T-cell (primary cell): ENCODE measurements at regions of chr4 and their contacts with region 1.

Region 1: GRCh38 chr4:26325191-26325590 is 4.4 kb downstream of the RBPJ start:
- DNase-seq: peak in 11 of 35 experiments; percentile 5 to 69 (median 12)
- ATAC-seq: peak; percentile 29 to 44 (median 34)
- H3K4me3 ChIP-seq: no peak overlapping the region
- H3K4me3 Mint-ChIP-seq: no peak overlapping the region
- H3K27ac ChIP-seq: no peak overlapping the region
- H3K27ac Mint-ChIP-seq: peak overlapping the region in 1 of 2 donors; percentile 40
- H3K4me1 ChIP-seq: peaks cover 12 to 15% of the 10 kb centered on the region in 2 experiments
- H3K4me1 Mint-ChIP-seq: peaks cover 37 to 52% (median 41%) of the 10 kb centered on the region in 3 donors
- H3K27me3 ChIP-seq: no peaks in the 10 kb centered on the region
- H3K27me3 Mint-ChIP-seq: no peaks in the 10 kb centered on the region

Region 2: GRCh38 chr4:25621027-25621930 is 703.9 kb before region 1 on chr4:
- CTCF ChIA-PET with region 1: no interaction called
- POLR2A ChIA-PET with region 1: no interaction called
- DNase-seq: no peak
- ATAC-seq: no peak
- H3K4me3 ChIP-seq: no peak overlapping the region
- H3K4me3 Mint-ChIP-seq: no peak overlapping the region
- H3K27ac ChIP-seq: no peak overlapping the region
- H3K27ac Mint-ChIP-seq: no peak overlapping the region
- H3K4me1 ChIP-seq: no peaks in the 10 kb centered on the region
- H3K4me1 Mint-ChIP-seq: peaks cover 0 to 7% (median 0%) of the 10 kb centered on the region in 3 donors
- H3K27me3 ChIP-seq: no peaks in the 10 kb centered on the region
- H3K27me3 Mint-ChIP-seq: peaks cover 5 to 6% of the 10 kb centered on the region in 2 donors

Region 3: GRCh38 chr4:26081795-26082498 is 243.2 kb before region 1 on chr4:
- CTCF ChIA-PET with region 1: interaction called in 1 of 2 experiments, 22 read pairs
- POLR2A ChIA-PET with region 1: no interaction called
- DNase-seq: peak in 2 of 35 experiments; percentile 13 to 66
- ATAC-seq: peak; percentile 52 to 71 (median 64)
- H3K4me3 ChIP-seq: no peak overlapping the region
- H3K4me3 Mint-ChIP-seq: no peak overlapping the region
- H3K27ac ChIP-seq: no peak overlapping the region
- H3K27ac Mint-ChIP-seq: no peak overlapping the region
- H3K4me1 ChIP-seq: no peaks in the 10 kb centered on the region
- H3K4me1 Mint-ChIP-seq: peaks cover 6 to 19% (median 13%) of the 10 kb centered on the region in 3 donors
- H3K27me3 ChIP-seq: peaks cover 0 to 5% of the 10 kb centered on the region in 2 experiments
- H3K27me3 Mint-ChIP-seq: peaks cover 0 to 27% of the 10 kb centered on the region in 2 donors

Region 4: GRCh38 chr4:26248647-26249046 is 76.5 kb before region 1 on chr4:
- CTCF ChIA-PET with region 1: no interaction called
- POLR2A ChIA-PET with region 1: no interaction called
- DNase-seq: no peak
- ATAC-seq: no peak
- H3K4me3 ChIP-seq: no peak overlapping the region
- H3K4me3 Mint-ChIP-seq: no peak overlapping the region
- H3K27ac ChIP-seq: no peak overlapping the region
- H3K27ac Mint-ChIP-seq: no peak overlapping the region
- H3K4me1 ChIP-seq: no peaks in the 10 kb centered on the region
- H3K4me1 Mint-ChIP-seq: no peaks in the 10 kb centered on the region
- H3K27me3 ChIP-seq: no peaks in the 10 kb centered on the region
- H3K27me3 Mint-ChIP-seq: peaks cover 0 to 4% of the 10 kb centered on the region in 2 donors

Region 5: DNA sequence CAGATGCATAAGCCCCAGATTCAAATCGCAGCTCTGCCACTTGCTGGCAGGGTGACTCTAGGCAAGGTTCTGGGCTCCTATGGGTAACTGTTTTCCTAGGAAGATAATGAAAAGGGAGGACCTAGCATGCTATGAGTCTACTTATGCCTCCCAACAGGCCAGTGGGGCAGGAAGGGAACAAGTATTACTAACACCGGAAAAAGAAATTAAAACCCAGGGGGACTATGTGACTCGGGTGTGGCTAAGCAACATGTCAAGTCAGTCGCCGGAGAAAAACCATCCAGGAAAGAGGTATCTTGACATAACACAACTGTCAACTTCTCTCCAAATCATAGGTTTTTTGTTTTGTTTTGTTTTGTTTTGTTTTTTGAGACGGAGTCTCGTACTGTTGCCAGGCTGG is 49.9 kb before region 1 on chr4:
- CTCF ChIA-PET with region 1: no interaction called
- POLR2A ChIA-PET with region 1: no interaction called
- DNase-seq: no peak
- ATAC-seq: no peak
- H3K4me3 ChIP-seq: no peak overlapping the region
- H3K4me3 Mint-ChIP-seq: no peak overlapping the region
- H3K27ac ChIP-seq: no peak overlapping the region
- H3K27ac Mint-ChIP-seq: no peak overlapping the region
- H3K4me1 ChIP-seq: peaks cover 0 to 2% of the 10 kb centered on the region in 2 experiments
- H3K4me1 Mint-ChIP-seq: peaks cover 0 to 10% (median 9%) of the 10 kb centered on the region in 3 donors
- H3K27me3 ChIP-seq: no peaks in the 10 kb centered on the region
- H3K27me3 Mint-ChIP-seq: peaks cover 0 to 4% of the 10 kb centered on the region in 2 donors